ENCODE measurements at regions of chr2 and their contacts with region 1.

Region 1: DNA sequence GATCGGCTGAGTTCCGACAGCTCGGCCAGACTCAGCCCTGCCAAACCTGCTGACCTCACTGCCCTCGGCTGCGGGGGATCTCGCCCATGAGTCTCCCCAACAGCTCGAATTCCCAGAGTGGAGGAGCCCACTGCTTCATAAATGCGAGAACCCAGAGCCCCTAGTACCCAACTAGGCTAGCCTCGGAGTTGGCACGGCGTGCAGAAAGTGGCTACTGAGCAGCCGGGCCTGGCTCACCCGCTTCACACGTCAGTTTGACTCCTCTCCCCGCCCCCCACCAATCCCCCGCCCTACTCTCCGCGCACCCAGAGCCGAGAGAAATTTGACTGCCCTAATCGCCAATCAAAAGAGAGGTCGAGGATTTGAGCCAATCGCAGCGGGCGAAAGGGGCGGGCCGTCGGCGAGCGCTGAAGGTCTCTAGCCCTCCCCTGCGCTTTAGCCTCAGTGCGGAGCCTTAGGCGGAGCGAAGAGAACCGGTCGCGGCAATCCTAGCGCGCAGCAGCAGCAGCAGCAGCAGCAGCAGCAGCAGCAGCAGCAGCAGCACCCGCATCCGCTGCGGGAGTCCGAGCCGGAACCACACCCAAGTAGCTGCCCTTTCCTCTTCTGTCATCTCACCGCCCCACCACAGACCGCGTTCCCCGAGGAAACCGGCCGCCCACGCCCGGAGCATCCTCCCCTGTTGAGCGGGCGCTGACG is at the start of gene GLS:
- DNase-seq: peak; percentile 93
- H3K4me3 ChIP-seq: peak within 1 kb of the TSS; percentile 68
- H3K27ac ChIP-seq: peak within 1 kb of the TSS; percentile 84
- H3K27me3 ChIP-seq: no peaks in the 10 kb centered on the region
- CTCF ChIP-seq: no peak
- polyA plus RNA-seq, gene GLS: 144 and 206 TPM in 2 replicates

Region 2: DNA sequence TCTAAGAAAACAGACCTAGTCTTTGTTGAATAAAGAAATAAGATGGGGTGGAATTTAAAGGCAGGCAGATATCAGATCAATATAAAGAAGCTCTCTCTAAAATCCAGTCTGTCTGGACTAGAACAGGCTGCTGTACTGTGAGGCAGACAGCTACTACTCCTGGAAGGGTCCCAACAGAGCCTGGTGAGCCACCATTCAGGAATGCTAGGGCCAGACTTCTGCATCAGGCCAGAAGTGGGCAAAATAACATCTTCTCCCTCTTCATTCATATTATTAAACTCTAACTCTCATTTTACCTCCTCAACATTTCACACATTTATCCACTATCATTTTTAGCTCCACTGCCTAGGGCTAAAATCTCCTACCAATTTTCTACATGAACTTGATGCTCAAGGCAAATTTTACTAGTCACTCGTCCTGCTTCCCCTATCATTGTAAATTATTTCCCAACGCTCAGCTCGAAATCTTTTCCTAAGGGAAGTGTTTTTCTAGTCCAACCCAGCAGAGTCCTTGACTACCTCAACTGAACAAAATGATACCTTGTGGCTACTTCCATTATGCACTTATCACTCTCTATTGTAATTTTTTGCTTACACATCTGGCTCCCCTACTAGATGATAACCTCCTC is 45.1 kb before region 1 on chr2:
- CTCF ChIA-PET with region 1: no interaction called
- POLR2A ChIA-PET with region 1: interaction called, 19 read pairs
- DNase-seq: peak; percentile 77
- H3K4me3 ChIP-seq: no peak overlapping the region
- H3K27ac ChIP-seq: no peak overlapping the region
- H3K27me3 ChIP-seq: no peaks in the 10 kb centered on the region
- CTCF ChIP-seq: no peak

Region 3: GRCh38 chr2:190849774-190850173 is 30.8 kb before region 1 on chr2:
- CTCF ChIA-PET with region 1: interaction called, 25 read pairs
- POLR2A ChIA-PET with region 1: interaction called, 14 read pairs
- DNase-seq: no peak
- H3K4me3 ChIP-seq: no peak overlapping the region
- H3K27ac ChIP-seq: no peak overlapping the region
- H3K27me3 ChIP-seq: no peaks in the 10 kb centered on the region
- CTCF ChIP-seq: no peak

Region 4: GRCh38 chr2:190858817-190859216 is 21.7 kb before region 1 on chr2:
- CTCF ChIA-PET with region 1: interaction called, 3 read pairs
- POLR2A ChIA-PET with region 1: interaction called, 45 read pairs
- DNase-seq: no peak
- H3K4me3 ChIP-seq: peak overlapping the region; percentile 7
- H3K27ac ChIP-seq: peak overlapping the region; percentile 68
- H3K27me3 ChIP-seq: no peaks in the 10 kb centered on the region
- CTCF ChIP-seq: no peak

Region 5: DNA sequence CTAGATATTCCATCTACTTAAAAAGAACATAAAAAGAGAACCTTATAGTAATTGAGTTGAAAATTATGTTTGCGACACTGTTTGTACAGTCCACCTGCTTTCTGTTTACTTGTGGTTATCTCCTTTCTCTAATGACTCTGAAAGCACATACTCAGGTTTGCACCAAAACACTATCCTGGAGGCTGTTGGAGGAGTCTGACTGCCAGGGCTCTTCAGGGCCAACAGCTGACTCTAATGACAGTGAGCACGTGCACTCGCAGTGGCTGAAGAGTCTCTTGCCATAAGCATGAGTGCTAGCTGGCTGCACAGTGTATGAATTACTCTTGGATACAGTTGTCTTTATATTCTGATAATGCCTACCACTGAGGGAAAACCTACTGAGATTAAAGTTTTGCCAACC is 16.6 kb before region 1 on chr2:
- CTCF ChIA-PET with region 1: interaction called, 3 read pairs
- POLR2A ChIA-PET with region 1: interaction called, 45 read pairs
- DNase-seq: no peak
- H3K4me3 ChIP-seq: no peak overlapping the region
- H3K27ac ChIP-seq: peak overlapping the region; percentile 62
- H3K27me3 ChIP-seq: no peaks in the 10 kb centered on the region
- CTCF ChIP-seq: no peak

Region 6: DNA sequence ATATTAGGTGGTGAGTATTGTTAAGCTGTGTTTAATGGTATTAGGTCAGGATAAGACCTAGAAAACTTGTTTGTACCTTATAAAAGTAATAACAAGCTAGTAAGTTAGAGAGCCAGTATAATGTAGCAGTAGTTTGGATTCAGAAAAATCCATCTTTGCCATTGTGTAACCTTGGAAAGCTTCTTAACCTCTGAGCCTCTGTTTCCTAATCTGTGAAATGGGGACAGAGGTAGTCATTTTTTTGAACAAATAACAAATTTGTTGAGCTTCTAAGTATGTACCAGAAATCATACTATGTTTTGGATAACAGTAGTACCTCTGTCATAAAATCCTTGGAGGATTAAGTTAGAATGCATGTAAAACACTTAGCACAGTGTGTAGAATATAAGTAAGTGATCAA is 12.6 kb after region 1 on chr2:
- CTCF ChIA-PET with region 1: no interaction called
- POLR2A ChIA-PET with region 1: interaction called, 13 read pairs
- DNase-seq: no peak
- H3K4me3 ChIP-seq: no peak overlapping the region
- H3K27ac ChIP-seq: no peak overlapping the region
- H3K27me3 ChIP-seq: no peaks in the 10 kb centered on the region
- CTCF ChIP-seq: no peak

Region 7: GRCh38 chr2:190911813-190912212 is 31.3 kb after region 1 on chr2:
- CTCF ChIA-PET with region 1: no interaction called
- POLR2A ChIA-PET with region 1: no interaction called
- DNase-seq: no peak
- H3K4me3 ChIP-seq: no peak overlapping the region
- H3K27ac ChIP-seq: no peak overlapping the region
- H3K27me3 ChIP-seq: no peaks in the 10 kb centered on the region
- CTCF ChIP-seq: no peak

Region 8: GRCh38 chr2:190947711-190948251 is 67.3 kb after region 1 on chr2:
- CTCF ChIA-PET with region 1: no interaction called
- POLR2A ChIA-PET with region 1: interaction called, 12 read pairs
- DNase-seq: peak; percentile 59
- H3K4me3 ChIP-seq: peak overlapping the region; percentile 11; the same call in 1 of the 2 replicates
- H3K27ac ChIP-seq: peak overlapping the region; percentile 47
- H3K27me3 ChIP-seq: no peaks in the 10 kb centered on the region
- CTCF ChIP-seq: peak; percentile 28

Region 9: GRCh38 chr2:190961918-190962487 is 81.5 kb after region 1 on chr2:
- CTCF ChIA-PET with region 1: no interaction called
- POLR2A ChIA-PET with region 1: no interaction called
- DNase-seq: no peak
- H3K4me3 ChIP-seq: no peak overlapping the region
- H3K27ac ChIP-seq: no peak overlapping the region
- H3K27me3 ChIP-seq: no peaks in the 10 kb centered on the region
- CTCF ChIP-seq: no peak